Prostate gland (tissue), 2 donors: ENCODE measurements at regions of chrX and their contacts with region 1.

Region 1: DNA sequence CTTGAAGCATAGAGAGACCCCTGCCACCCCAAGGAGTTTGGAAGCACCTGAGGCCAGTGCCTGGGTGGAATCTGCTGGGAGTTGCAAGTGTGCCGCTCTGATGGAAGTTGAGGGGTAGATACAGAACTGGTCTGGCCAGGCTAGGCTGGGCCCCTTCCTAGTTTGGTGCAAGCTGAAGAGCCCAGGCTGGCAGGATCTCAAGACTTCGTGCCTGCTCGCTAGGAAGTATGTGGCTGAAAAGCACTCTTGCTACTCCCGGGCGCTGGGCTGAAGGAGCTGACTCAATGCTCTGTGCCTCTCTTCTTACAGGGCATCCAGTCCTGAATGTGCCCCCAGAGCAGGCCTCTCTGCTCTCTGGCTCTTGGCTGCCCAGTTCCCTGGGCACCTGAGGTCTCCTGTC is 51.7 kb upstream of the PJA1 start:
- DNase-seq: peak; percentile 21
- H3K4me3 ChIP-seq: no peak overlapping the region
- H3K27ac ChIP-seq: no peak overlapping the region
- H3K4me1 ChIP-seq: no peaks in the 10 kb centered on the region
- H3K27me3 ChIP-seq: no peaks in the 10 kb centered on the region
- CTCF ChIP-seq: no peak
- POLR2A ChIP-seq: no peak

Region 2: DNA sequence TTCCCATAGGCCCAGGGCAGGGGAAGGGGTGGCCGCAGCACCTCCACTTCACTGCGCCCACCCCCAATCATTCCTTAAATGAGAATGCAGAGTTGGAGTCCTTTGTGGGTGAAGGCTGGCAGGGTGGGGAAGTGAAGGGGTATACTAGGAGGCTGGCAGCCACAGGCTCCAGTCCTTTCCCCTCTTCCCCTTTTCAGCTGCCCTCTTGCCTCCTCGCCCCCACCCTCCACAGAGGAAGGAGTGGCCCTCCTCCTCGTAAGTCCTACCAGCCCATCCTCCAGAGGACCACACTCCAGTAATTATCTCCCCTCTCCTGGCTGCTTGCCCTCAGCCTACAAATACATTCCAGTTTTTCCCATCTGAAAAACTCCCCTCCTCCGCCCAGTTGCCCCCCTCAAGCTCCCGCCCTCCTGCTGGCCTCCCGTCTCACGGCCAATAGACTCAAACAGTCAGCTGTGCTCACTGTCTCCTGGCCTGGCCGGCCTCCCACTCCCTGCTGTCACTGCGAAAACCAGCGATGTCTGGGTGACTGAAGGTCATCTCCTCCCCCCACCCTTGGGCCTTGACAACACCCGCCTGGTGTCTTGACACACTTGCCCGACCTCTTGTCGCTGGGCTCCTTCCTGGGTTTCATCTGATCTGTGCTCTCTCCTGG is 349.3 kb before region 1 on chrX:
- intact Hi-C with region 1: no loop called
- DNase-seq: no peak
- H3K4me3 ChIP-seq: no peak overlapping the region
- H3K27ac ChIP-seq: no peak overlapping the region
- H3K4me1 ChIP-seq: no peaks in the 10 kb centered on the region
- H3K27me3 ChIP-seq: no peaks in the 10 kb centered on the region
- CTCF ChIP-seq: no peak
- POLR2A ChIP-seq: no peak

Region 3: DNA sequence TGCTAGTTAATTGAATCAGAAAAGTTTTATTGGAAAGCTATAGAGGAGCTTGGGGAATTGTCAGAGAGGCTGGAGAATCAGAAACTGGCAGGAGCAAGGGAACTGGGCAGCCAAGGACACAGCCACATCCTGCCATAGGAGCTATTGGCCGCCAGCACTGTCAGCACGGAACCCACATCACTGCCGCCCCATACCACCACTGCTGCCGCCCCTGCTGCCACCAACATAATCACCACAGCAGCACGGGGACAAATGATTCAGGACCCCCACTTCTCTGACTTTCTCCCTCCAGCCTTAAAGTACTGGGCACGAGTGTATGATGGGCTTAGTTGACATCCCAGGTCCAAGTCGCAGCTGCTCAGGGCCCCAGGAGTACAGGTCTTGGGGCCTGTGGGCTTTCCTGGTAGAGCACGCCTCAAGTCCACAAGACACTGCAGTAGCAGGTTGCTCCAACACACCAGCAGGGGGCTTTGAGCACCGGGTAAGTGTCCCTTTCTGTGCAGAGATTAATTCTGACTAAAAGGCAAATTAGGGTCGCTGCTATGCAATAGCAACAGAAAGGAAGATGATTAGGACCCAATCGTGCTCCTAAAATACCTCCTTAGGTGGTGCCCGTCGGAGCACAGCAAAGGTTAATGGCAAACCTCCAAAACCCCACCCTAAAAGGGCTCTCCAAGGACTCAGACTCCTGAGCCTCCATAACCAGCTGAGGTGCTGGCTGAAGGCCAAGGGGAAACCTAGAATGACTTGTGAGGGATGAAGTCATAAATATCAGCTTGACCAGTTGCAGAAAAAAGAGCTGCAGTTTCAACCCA is 58.5 kb before region 1 on chrX:
- intact Hi-C with region 1: loop called (anchors 5 kb)
- DNase-seq: peak; percentile 17
- H3K4me3 ChIP-seq: no peak overlapping the region
- H3K27ac ChIP-seq: no peak overlapping the region
- H3K4me1 ChIP-seq: no peaks in the 10 kb centered on the region
- H3K27me3 ChIP-seq: no peaks in the 10 kb centered on the region
- CTCF ChIP-seq: peak in 2 of 4 experiments; percentile 30 to 35
- POLR2A ChIP-seq: no peak